ENCODE measurements at regions of chr7 and their contacts with region 1.

Region 1: DNA sequence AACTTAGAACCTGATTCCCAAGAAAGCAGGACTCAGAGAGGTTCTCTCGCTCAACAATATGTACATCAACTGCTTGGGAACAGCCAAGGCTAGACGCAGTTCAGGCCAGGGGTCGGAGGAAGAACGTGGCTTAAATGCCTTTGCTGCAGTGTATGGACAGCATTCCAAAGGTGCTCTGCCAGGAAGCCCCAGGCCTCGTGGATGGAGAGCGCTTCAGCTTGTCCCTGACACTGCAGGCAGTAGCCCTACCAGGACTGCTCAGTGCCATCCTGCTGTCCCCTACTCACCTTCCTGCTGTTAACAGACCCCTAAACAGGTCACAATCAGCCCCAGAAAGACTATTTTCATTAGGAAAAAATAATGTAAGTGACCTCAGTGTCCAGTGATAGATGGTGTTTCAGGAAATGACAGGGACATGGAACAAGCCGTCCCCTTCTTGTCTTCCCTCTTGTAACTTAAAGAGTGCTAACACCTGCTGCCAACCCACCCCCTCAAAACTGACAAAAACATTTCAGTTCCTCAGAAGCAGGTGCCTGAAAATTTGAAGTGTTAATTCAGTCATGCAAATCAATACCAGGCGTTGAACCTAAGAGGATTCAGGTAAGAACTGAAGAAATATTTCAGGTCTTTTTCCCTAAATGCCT is 16.5 kb downstream of the CREB3L2 start:
- DNase-seq: no peak
- ATAC-seq: no peak
- H3K4me3 ChIP-seq: no peak overlapping the region
- H3K27ac ChIP-seq: no peak overlapping the region
- H3K4me1 ChIP-seq: peaks cover 35% of the 10 kb centered on the region
- H3K27me3 ChIP-seq: no peaks in the 10 kb centered on the region

Region 2: DNA sequence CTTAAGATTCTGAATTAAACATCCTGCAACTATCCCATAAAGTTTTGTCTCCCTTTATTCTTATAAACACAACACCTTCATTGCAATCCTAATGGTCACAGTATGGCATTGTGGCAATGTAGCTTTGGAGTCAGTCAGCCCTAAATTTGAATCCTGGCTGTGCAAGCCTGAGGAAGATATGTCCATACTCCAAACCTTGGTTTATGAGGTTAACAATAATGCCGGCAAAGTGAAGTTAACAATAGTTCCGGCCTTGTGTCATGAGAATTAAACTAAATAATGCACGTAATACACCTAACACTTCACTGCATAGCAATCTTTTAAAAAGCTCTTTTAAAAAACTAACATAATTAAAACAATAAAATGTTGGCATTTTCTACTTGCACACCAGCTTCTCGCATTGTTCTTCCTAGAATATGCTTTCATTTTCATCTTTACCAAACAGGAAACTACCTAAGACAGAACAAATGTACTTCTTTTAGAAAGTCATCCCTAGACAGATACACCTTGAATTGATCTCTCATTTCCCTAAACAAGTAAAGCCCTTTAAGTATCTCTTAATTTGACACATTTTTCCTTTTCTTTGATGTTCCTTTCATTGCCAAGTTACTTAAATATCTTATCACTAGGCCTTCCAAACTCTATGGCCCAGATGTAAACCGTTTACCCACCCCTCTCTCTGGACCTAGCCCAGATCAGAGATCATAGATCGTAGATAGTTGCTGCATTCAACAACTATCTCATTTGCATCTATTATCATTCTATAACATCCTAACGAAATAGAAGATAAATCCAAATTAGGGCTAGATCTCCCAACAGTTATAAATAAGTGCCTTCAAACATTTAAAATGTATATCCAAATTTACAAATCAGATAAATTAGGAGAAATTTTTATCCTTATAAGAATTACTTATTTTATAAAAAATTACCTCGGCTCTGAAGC is 50.2 kb before region 1 on chr7:
- intact Hi-C with region 1: loop called in 2 of 4 experiments (anchors 5 to 10 kb)
- DNase-seq: no peak
- ATAC-seq: no peak
- H3K4me3 ChIP-seq: peak overlapping the region; percentile 27
- H3K27ac ChIP-seq: no peak overlapping the region
- H3K4me1 ChIP-seq: peaks cover 32% of the 10 kb centered on the region
- H3K27me3 ChIP-seq: no peaks in the 10 kb centered on the region